ENCODE measurements at regions of chr6 and their contacts with region 1.

Region 1: GRCh38 chr6:87672641-87673040 is 29.4 kb downstream of the AKIRIN2 start:
- DNase-seq: no peak
- ATAC-seq: no peak
- H3K4me3 ChIP-seq: no peak overlapping the region
- H3K4me3 Mint-ChIP-seq: no peak overlapping the region
- H3K27ac ChIP-seq: no peak overlapping the region
- H3K27ac Mint-ChIP-seq: peak overlapping the region in 1 of 2 donors; percentile 72
- H3K4me1 ChIP-seq: peaks cover 2 to 4% of the 10 kb centered on the region in 2 experiments
- H3K4me1 Mint-ChIP-seq: peaks cover 18 to 24% (median 20%) of the 10 kb centered on the region in 3 donors
- H3K27me3 ChIP-seq: no peaks in the 10 kb centered on the region
- H3K27me3 Mint-ChIP-seq: no peaks in the 10 kb centered on the region

Region 2: DNA sequence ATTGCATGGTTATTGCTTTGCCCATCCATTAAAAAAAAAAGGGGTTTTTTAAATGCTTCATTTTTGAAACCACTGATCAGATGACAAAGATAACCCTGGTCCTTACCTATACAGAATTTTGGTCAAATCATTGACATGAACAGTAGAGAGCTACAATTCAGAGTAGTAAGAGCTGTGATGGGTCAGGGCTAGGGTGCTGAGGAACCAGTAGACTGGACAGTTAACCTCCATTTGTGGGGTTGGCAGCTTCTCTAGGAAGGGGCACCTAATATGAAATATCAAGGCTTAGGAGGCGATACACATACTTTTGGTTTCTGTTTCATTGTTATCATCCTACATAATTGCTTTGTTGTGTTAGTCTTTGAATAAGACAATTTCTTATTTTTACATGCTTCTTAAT is 27.6 kb before region 1 on chr6:
- CTCF ChIA-PET with region 1: no interaction called
- POLR2A ChIA-PET with region 1: no interaction called
- DNase-seq: peak in 2 of 35 experiments; percentile 1 to 29
- ATAC-seq: peak in 3 of 4 experiments; percentile 40 to 54 (median 53)
- H3K4me3 ChIP-seq: peak overlapping the region in 1 of 2 donors; percentile 16
- H3K4me3 Mint-ChIP-seq: peak overlapping the region; percentile 57 to 76 (median 71)
- H3K27ac ChIP-seq: peak overlapping the region; percentile 37
- H3K27ac Mint-ChIP-seq: peak overlapping the region; percentile 81 to 82
- H3K4me1 ChIP-seq: peaks cover 3 to 5% of the 10 kb centered on the region in 2 experiments
- H3K4me1 Mint-ChIP-seq: peaks cover 0 to 19% (median 15%) of the 10 kb centered on the region in 3 donors
- H3K27me3 ChIP-seq: no peaks in the 10 kb centered on the region
- H3K27me3 Mint-ChIP-seq: no peaks in the 10 kb centered on the region

Region 3: GRCh38 chr6:87700397-87701186 is 28.0 kb after region 1 on chr6:
- CTCF ChIA-PET with region 1: no interaction called
- POLR2A ChIA-PET with region 1: interaction called, 7 to 10 read pairs
- DNase-seq: peak in 9 of 35 experiments; percentile 4 to 63 (median 19)
- ATAC-seq: no peak
- H3K4me3 ChIP-seq: peak overlapping the region; percentile 72 to 98
- H3K4me3 Mint-ChIP-seq: peak overlapping the region; percentile 83 to 98 (median 94)
- H3K27ac ChIP-seq: peak overlapping the region; percentile 96
- H3K27ac Mint-ChIP-seq: peak overlapping the region; percentile 90 to 97
- H3K4me1 ChIP-seq: peaks cover 19 to 27% of the 10 kb centered on the region in 2 experiments
- H3K4me1 Mint-ChIP-seq: peaks cover 52 to 62% (median 56%) of the 10 kb centered on the region in 3 donors
- H3K27me3 ChIP-seq: no peaks in the 10 kb centered on the region
- H3K27me3 Mint-ChIP-seq: no peaks in the 10 kb centered on the region